K562 (cell line): ENCODE measurements at regions of chr2 and their contacts with region 1.

Region 1: DNA sequence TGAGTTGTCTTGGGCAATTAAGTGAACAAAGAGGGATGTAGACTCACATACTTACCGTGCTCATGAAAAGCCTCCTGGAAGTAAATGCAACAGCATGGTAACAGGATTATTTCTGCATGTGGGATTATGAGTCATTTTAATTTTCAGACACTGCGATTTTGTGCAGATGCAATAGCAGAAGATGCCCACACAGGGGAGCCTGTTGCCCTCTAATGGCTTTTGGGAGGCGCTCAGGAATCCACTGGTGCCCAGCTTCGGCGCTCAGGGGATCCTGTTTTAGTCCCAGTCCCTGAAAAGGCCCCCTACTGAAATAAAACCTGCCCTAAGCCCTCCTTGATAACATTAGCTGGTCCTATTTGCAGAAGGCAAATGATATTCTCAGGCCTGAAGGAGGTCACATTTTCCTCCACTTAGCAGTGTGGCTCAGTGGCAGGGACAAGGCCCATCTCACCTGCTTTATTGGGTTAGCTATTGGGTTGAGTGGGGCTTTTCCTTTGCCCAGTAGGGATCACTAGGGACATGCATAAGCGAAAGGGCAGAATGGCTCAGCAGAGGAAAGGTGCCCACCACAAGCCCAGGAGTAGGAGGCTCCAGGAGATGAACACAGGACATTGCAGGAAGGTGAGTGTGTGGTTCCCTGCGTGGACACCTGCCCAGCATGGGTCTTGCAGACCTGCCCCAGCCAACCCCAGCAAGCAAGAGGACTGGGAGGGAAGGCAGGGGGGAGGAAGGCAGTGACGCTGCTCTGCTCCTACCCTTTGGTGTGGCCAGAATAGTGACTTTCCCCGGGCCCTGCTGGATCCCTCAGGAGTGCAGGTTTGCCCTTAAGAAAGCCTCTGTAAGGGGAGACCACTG is 26.5 kb upstream of the KCNS3 start:
- DNase-seq: peak; percentile 53 to 58 (median 56)
- ATAC-seq: peak; percentile 88
- H3K4me3 ChIP-seq: no peak overlapping the region
- H3K27ac ChIP-seq: no peak overlapping the region
- H3K4me1 ChIP-seq: no peaks in the 10 kb centered on the region
- H3K27me3 ChIP-seq: no peaks in the 10 kb centered on the region
- CTCF ChIP-seq: peak; percentile 72 to 86 (median 86)
- EP300 ChIP-seq: no peak
- POLR2A ChIP-seq: no peak
- RAD21 ChIP-seq: peak; percentile 89 to 93

Region 2: GRCh38 chr2:17753803-17754663 is 97.9 kb before region 1 on chr2 and contains the starts of genes GEN1 and SMC6:
- CTCF ChIA-PET with region 1: no interaction called
- POLR2A ChIA-PET with region 1: no interaction called
- in situ Hi-C with region 1: no loop called
- intact Hi-C with region 1: no loop called
- DNase-seq: peak; percentile 92 to 97 (median 96)
- ATAC-seq: peak; percentile 82
- H3K4me3 ChIP-seq: peak within 1 kb of the TSS; percentile 72
- H3K27ac ChIP-seq: peak within 1 kb of the TSS; percentile 91
- H3K4me1 ChIP-seq: peaks cover 10 to 35% of the 10 kb centered on the region in 2 experiments
- H3K27me3 ChIP-seq: no peaks in the 10 kb centered on the region
- CTCF ChIP-seq: no peak
- EP300 ChIP-seq: no peak
- POLR2A ChIP-seq: peak; percentile 73
- RAD21 ChIP-seq: no peak
- polyA plus RNA-seq, gene GEN1: 8.6 to 12.4 TPM
- polyA plus RNA-seq, gene SMC6: 14.2 to 18.5 TPM

Region 3: GRCh38 chr2:17918789-17919188 is 66.8 kb after region 1 on chr2:
- CTCF ChIA-PET with region 1: no interaction called
- POLR2A ChIA-PET with region 1: no interaction called
- in situ Hi-C with region 1: no loop called
- intact Hi-C with region 1: loop called (anchors 1 kb)
- DNase-seq: no peak
- ATAC-seq: no peak
- H3K4me3 ChIP-seq: no peak overlapping the region
- H3K27ac ChIP-seq: no peak overlapping the region
- H3K4me1 ChIP-seq: no peaks in the 10 kb centered on the region
- H3K27me3 ChIP-seq: no peaks in the 10 kb centered on the region
- CTCF ChIP-seq: no peak; a peak in 1 of 6 replicates
- EP300 ChIP-seq: no peak
- POLR2A ChIP-seq: no peak
- RAD21 ChIP-seq: peak in 1 of 2 experiments; percentile 35; a peak in 2 of 4 replicates

Region 4: DNA sequence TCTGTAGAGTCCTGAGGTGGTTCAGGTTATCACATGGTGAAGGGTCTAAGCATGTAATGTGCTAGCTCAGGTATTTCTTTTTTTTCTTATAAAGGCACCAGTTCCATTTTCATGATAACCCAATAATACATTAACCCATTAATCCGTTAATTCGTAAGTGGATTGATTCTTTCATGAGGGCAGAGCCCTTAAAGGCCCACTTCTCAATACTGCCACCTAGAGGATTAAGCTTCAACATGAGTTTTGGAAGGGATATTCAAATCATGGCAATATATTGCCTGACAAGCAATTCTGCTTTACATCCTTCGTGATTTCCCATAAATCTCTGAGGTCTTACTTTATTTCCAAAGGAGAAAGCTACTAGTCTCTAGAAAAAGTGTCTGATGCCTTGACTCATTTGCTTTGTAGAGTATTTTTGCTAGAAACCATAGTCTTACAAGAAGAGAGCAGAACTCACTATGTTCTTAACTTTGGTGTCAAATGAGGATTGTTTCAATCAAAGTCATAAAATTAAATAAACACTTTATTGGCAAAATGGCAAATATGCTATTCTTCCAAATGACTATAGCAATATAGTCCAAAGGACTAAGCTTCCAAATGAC is 297.8 kb after region 1 on chr2:
- CTCF ChIA-PET with region 1: interaction called, 3 read pairs
- POLR2A ChIA-PET with region 1: no interaction called
- in situ Hi-C with region 1: no loop called
- intact Hi-C with region 1: loop called (anchors 1 kb)
- DNase-seq: peak in 2 of 4 experiments; percentile 9 to 20
- ATAC-seq: no peak
- H3K4me3 ChIP-seq: no peak overlapping the region
- H3K27ac ChIP-seq: no peak overlapping the region
- H3K4me1 ChIP-seq: no peaks in the 10 kb centered on the region
- H3K27me3 ChIP-seq: no peaks in the 10 kb centered on the region
- CTCF ChIP-seq: peak; percentile 7 to 33 (median 30); a peak in 3 of 6 replicates
- EP300 ChIP-seq: no peak
- POLR2A ChIP-seq: no peak
- RAD21 ChIP-seq: peak in 1 of 2 experiments; percentile 60; a peak in 3 of 4 replicates

Region 5: GRCh38 chr2:18178736-18179349 is 326.9 kb after region 1 on chr2:
- CTCF ChIA-PET with region 1: interaction called, 13 read pairs
- POLR2A ChIA-PET with region 1: no interaction called
- in situ Hi-C with region 1: loop called (anchors 10 kb)
- intact Hi-C with region 1: loop called (anchors 1 kb)
- DNase-seq: peak; percentile 38 to 59 (median 56)
- ATAC-seq: peak; percentile 83
- H3K4me3 ChIP-seq: no peak overlapping the region
- H3K27ac ChIP-seq: no peak overlapping the region
- H3K4me1 ChIP-seq: no peaks in the 10 kb centered on the region
- H3K27me3 ChIP-seq: no peaks in the 10 kb centered on the region
- CTCF ChIP-seq: peak; percentile 51 to 73 (median 68)
- EP300 ChIP-seq: no peak
- POLR2A ChIP-seq: no peak
- RAD21 ChIP-seq: peak; percentile 68 to 79

Region 6: GRCh38 chr2:18186816-18187613 is 335.1 kb after region 1 on chr2:
- CTCF ChIA-PET with region 1: no interaction called
- POLR2A ChIA-PET with region 1: no interaction called
- in situ Hi-C with region 1: loop called (anchors 10 kb)
- intact Hi-C with region 1: no loop called
- DNase-seq: no peak
- ATAC-seq: no peak
- H3K4me3 ChIP-seq: no peak overlapping the region
- H3K27ac ChIP-seq: no peak overlapping the region
- H3K4me1 ChIP-seq: no peaks in the 10 kb centered on the region
- H3K27me3 ChIP-seq: no peaks in the 10 kb centered on the region
- CTCF ChIP-seq: no peak
- EP300 ChIP-seq: no peak
- POLR2A ChIP-seq: no peak
- RAD21 ChIP-seq: no peak

Region 7: GRCh38 chr2:18378020-18378653 is 526.2 kb after region 1 on chr2:
- CTCF ChIA-PET with region 1: interaction called, 10 read pairs
- POLR2A ChIA-PET with region 1: no interaction called
- in situ Hi-C with region 1: loop called (anchors 5 kb)
- intact Hi-C with region 1: loop called (anchors 1 kb)
- DNase-seq: peak; percentile 42 to 57 (median 53)
- ATAC-seq: peak; percentile 83
- H3K4me3 ChIP-seq: no peak overlapping the region
- H3K27ac ChIP-seq: no peak overlapping the region
- H3K4me1 ChIP-seq: no peaks in the 10 kb centered on the region
- H3K27me3 ChIP-seq: no peaks in the 10 kb centered on the region
- CTCF ChIP-seq: peak; percentile 53 to 69 (median 61); a peak in 5 of 6 replicates
- EP300 ChIP-seq: no peak
- POLR2A ChIP-seq: no peak
- RAD21 ChIP-seq: peak; percentile 57 to 72

Region 8: GRCh38 chr2:18500333-18500732 is 648.4 kb after region 1 on chr2:
- CTCF ChIA-PET with region 1: no interaction called
- POLR2A ChIA-PET with region 1: no interaction called
- in situ Hi-C with region 1: no loop called
- intact Hi-C with region 1: no loop called
- DNase-seq: no peak
- ATAC-seq: no peak
- H3K4me3 ChIP-seq: no peak overlapping the region
- H3K27ac ChIP-seq: no peak overlapping the region
- H3K4me1 ChIP-seq: no peaks in the 10 kb centered on the region
- H3K27me3 ChIP-seq: no peaks in the 10 kb centered on the region
- CTCF ChIP-seq: no peak
- EP300 ChIP-seq: no peak
- POLR2A ChIP-seq: no peak
- RAD21 ChIP-seq: no peak